ENCODE measurements at regions of chr17 and their contacts with region 1.

Region 1: DNA sequence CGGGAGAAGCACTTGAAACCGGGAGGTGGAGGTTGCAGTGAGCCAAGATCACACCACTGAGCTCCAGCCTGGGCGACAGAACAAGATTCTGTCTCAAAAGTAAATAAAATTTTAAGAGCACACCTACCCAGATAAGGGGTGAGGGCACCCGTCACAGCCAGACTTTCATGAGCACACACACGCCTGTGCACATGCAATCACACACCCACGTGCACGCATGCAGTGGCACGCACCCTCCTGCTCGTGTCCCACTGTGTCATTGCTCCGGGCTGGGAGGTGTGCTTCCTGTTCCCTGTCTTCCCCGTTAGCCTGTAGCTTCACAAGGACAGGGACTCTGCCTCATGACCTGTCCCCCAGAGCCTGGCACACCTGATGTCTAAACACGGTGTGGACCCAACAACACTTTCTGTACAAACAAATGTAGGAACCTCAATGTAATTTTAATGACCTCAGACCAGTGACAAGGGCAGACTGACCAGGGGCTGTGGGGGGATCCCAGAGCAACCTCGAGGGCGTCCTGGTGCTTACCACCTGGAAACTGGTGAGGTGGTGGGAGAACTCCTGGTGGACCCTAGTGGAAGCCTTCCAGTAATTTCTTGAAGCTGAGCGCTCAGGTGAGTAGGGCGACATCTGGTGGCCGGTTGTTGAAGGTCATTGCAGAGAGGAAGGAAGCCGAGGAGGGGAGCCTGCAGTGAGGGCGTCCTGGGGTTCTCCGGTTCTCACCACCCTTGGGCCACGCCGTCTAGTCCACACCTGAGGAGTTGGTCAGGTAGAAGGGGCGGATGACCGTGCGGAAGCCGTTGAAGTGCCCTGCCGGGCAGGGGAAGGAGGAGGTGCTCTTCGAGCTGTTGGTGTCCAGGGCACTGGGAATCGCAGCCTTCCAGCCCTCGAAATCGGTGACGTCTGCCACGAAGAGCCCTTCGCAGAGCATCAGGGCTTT is 8.6 kb downstream of the LGALS3BP start:
- DNase-seq: peak; percentile 69 to 88
- H3K4me3 ChIP-seq: no peak overlapping the region
- H3K4me1 ChIP-seq: peaks cover 13% of the 10 kb centered on the region
- H3K27me3 ChIP-seq: no peaks in the 10 kb centered on the region

Region 2: GRCh38 chr17:78176548-78177025 is 794.5 kb before region 1 on chr17:
- in situ Hi-C with region 1: loop called (anchors 10 kb)
- DNase-seq: peak; percentile 34 to 81
- H3K4me3 ChIP-seq: no peak overlapping the region
- H3K4me1 ChIP-seq: no peaks in the 10 kb centered on the region
- H3K27me3 ChIP-seq: no peaks in the 10 kb centered on the region

Region 3: GRCh38 chr17:78412403-78412802 is 558.7 kb before region 1 on chr17:
- in situ Hi-C with region 1: no loop called
- DNase-seq: no peak
- H3K4me3 ChIP-seq: no peak overlapping the region
- H3K4me1 ChIP-seq: no peaks in the 10 kb centered on the region
- H3K27me3 ChIP-seq: no peaks in the 10 kb centered on the region; the same call in 1 of the 2 replicates